ENCODE measurements at regions of chr1 and their contacts with region 1.

Region 1: DNA sequence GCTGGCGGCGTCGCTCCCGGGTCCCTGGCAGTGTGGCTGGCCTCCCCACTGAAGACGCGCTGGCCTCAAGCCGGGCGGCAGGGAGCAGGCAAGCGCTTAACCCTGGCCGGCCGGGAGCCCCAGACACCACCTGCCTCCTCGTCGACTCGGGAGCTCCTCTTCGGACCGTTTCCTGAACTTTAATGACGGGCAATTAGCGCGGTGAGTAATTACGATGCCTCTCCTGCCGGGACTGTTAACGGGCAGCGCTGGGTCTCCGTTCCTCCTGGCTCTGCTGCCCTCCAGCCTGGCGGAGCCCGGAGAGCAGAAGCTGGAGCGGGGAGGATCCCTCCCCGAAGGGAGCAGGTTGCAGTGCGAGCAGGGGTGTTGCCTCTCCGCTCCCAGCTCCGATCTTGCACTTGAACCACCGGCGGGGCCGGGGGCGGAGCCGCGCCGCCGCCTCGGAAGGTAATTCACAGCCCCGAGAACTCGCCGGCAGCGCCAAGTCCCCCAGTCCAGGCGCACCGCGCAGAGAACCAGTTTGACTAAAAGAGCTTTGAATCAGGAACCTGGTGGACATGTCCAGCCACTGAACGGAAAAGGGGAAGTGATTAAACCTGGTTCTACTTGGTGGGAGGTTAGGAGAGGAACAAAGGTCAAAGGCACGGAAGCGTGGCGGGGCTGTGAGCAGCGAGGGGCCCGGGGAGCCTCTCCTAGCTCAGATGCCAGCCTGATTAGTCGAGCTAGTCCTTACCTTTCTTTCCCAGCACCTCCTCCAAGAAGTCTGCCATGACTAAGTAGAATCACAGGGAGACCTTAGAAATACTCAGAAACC is 18.3 kb upstream of the PLEKHA6 start:
- DNase-seq: peak; percentile 67

Region 2: GRCh38 chr1:204398217-204399081 is 20.4 kb after region 1 on chr1:
- CTCF ChIA-PET with region 1: interaction called, 15 read pairs
- POLR2A ChIA-PET with region 1: interaction called, 5 read pairs
- DNase-seq: peak; percentile 90

Region 3: GRCh38 chr1:204431310-204432165 is 53.5 kb after region 1 on chr1:
- CTCF ChIA-PET with region 1: no interaction called
- POLR2A ChIA-PET with region 1: no interaction called
- DNase-seq: peak; percentile 87

Measured in HEK293T (cell line).